ENCODE measurements at regions of chr14 and their contacts with region 1.

Region 1: DNA sequence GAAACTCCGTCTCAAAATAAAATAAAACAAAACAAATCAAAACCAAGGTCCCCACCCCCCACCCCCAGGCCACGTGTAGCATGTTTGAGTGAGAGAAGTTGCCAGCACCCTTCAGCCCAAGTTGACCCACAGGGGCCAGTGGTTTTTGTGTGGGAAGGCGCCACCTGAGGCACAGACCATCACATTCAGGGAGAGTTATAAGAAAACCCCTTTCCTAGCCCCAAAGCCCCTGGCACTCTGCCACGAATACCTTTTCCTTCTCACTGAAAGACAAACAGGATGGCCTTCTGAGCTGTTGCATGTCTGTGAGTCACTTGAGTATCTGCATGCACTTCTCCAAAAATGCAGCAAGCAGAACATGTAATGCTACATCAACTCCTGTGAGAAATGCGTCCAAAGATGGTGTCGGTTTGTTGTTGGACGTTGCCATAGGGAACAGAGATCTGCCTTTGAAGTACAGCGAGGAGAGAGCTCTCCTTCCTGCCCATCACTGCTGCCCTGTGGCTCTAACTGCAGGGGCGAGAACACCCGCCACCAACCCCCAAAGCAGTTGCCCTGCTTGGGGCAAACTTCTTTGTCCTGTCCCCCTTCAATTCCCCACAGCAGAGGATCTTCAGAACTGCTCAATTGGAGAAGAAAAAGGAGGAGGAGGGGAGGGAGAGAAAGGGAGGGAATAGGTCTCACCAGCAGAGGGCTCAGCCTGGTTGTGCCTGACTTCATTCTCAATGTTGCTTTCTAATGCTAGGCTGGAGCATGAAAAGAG is 2.7 kb upstream of the TRAF3 start:
- DNase-seq: peak; percentile 32 to 87 (median 67)
- ATAC-seq: peak; percentile 32
- H3K4me3 ChIP-seq: no peak overlapping the region
- H3K4me3 Mint-ChIP-seq: peak overlapping the region; percentile 57
- H3K27ac ChIP-seq: peak overlapping the region; percentile 46 to 66
- H3K27ac Mint-ChIP-seq: peak overlapping the region; percentile 93
- H3K4me1 ChIP-seq: peaks cover 24% of the 10 kb centered on the region
- H3K4me1 Mint-ChIP-seq: peaks cover 28% of the 10 kb centered on the region
- H3K27me3 ChIP-seq: no peaks in the 10 kb centered on the region
- H3K27me3 Mint-ChIP-seq: no peaks in the 10 kb centered on the region
- CTCF ChIP-seq: peak; percentile 67

Region 2: DNA sequence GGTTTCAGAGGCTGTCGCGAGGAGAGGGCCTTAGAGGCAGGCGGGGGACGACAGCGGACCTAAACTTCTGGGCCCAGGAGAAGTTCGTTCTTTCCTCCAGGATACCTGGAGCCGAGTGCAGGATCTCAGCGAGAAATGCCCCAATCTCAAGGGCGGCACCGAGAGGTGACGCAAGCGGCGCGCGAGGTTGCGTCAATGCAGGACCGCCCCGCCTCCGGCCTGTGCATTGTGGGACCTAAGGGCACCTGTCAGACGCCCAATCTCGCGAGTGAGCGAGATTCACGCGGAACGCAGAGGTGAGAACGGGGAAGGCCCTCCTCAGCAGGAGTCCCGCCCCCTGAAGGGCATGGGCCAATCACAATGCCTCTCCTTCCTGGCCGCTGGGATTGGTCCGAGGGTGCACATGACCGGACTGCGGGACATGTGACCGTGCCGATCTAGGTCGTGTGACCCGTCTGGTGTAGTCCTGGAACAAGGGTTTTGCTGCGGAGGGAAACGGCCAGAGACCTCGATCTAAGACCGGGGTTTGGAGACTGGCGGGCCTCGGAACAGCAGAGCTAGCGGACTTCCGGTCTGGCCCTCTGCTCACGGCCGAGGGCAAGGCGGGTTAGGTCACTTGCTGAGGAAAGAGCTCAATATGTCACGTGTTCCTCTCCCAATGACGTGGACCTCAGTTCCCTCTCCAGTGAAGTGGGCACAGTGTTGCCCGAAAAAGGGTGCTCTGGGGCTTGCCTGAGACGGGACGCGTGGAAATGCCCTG is 826.5 kb before region 1 on chr14:
- CTCF ChIA-PET with region 1: no interaction called
- POLR2A ChIA-PET with region 1: no interaction called
- intact Hi-C with region 1: loop called in 1 of 2 experiments (anchors 5 kb)
- DNase-seq: peak; percentile 98 to 100 (median 99)
- ATAC-seq: peak; percentile 95
- H3K4me3 ChIP-seq: peak overlapping the region; percentile 81 to 82
- H3K4me3 Mint-ChIP-seq: peak overlapping the region; percentile 93
- H3K27ac ChIP-seq: peak overlapping the region; percentile 95 to 100
- H3K27ac Mint-ChIP-seq: peak overlapping the region; percentile 99
- H3K4me1 ChIP-seq: peaks cover 14% of the 10 kb centered on the region
- H3K4me1 Mint-ChIP-seq: peaks cover 20% of the 10 kb centered on the region
- H3K27me3 ChIP-seq: peaks cover 0 to 6% of the 10 kb centered on the region in 2 experiments
- H3K27me3 Mint-ChIP-seq: peaks cover 23% of the 10 kb centered on the region
- CTCF ChIP-seq: no peak

Region 3: GRCh38 chr14:102304611-102305509 is 469.7 kb before region 1 on chr14 and contains the start of gene MOK:
- CTCF ChIA-PET with region 1: no interaction called
- POLR2A ChIA-PET with region 1: no interaction called
- intact Hi-C with region 1: loop called in 1 of 2 experiments (anchors 10 kb)
- DNase-seq: peak; percentile 94 to 99 (median 98)
- ATAC-seq: peak; percentile 92
- H3K4me3 ChIP-seq: peak within 1 kb of the TSS; percentile 83 to 97
- H3K4me3 Mint-ChIP-seq: peak within 1 kb of the TSS; percentile 91
- H3K27ac ChIP-seq: peak within 1 kb of the TSS; percentile 84 to 88
- H3K27ac Mint-ChIP-seq: peak within 1 kb of the TSS; percentile 94
- H3K4me1 ChIP-seq: peaks cover 5% of the 10 kb centered on the region
- H3K4me1 Mint-ChIP-seq: peaks cover 10% of the 10 kb centered on the region
- H3K27me3 ChIP-seq: no peaks in the 10 kb centered on the region
- H3K27me3 Mint-ChIP-seq: peaks cover 2% of the 10 kb centered on the region
- CTCF ChIP-seq: no peak
- total RNA-seq, gene MOK: 2.7 to 3.6 TPM

Region 4: GRCh38 chr14:102908806-102909455 is 134.4 kb after region 1 on chr14:
- CTCF ChIA-PET with region 1: no interaction called
- POLR2A ChIA-PET with region 1: no interaction called
- intact Hi-C with region 1: no loop called
- DNase-seq: no peak
- ATAC-seq: no peak
- H3K4me3 ChIP-seq: no peak overlapping the region
- H3K4me3 Mint-ChIP-seq: no peak overlapping the region
- H3K27ac ChIP-seq: no peak overlapping the region
- H3K27ac Mint-ChIP-seq: no peak overlapping the region
- H3K4me1 ChIP-seq: no peaks in the 10 kb centered on the region
- H3K4me1 Mint-ChIP-seq: no peaks in the 10 kb centered on the region
- H3K27me3 ChIP-seq: no peaks in the 10 kb centered on the region
- H3K27me3 Mint-ChIP-seq: no peaks in the 10 kb centered on the region
- CTCF ChIP-seq: no peak

Region 5: DNA sequence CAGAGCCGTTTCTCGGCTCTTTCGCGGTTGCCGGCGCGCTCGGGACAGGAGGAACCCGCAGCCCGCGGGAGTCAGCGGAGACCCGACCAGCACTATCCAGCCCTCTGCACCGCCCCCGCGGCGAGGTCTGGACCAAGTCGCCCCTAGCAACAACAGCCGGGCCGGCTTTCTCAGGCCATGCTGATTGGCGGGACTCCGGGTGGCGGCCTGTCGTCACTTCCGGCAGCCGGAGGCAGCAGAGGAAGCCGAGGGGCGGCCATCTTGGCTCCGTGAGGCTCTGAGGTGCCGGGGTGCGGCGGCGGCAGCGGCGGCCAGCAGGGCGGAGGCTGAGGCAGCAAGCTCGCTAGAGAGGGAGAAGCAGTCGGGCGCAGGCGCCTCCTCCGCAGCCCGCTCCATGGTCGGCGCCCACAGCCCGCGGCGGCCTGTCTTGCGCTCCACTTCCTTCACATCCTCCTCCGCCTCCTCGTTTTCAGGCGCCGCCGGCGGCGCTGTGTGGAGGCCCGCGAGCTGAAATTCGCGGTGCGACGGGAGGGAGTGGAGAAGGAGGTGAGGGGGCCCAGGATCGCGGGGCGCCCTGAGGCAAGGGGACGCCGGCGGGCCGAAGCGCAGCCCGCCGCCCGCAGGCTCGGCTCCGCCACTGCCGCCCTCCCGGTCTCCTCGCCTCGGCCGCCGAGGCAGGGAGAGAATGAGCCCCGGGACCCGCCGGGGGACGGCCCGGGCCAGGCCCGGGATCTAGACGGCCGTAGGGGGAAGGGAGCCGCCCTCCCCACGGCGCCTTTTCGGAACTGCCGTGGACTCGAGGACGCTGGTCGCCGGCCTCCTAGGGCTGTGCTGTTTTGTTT is 610.8 kb after region 1 on chr14 and contains the start of gene MARK3:
- CTCF ChIA-PET with region 1: no interaction called
- POLR2A ChIA-PET with region 1: no interaction called
- intact Hi-C with region 1: loop called in 1 of 2 experiments (anchors 5 kb)
- DNase-seq: peak; percentile 91 to 98 (median 96)
- ATAC-seq: peak; percentile 88
- H3K4me3 ChIP-seq: peak within 1 kb of the TSS; percentile 72 to 73
- H3K4me3 Mint-ChIP-seq: peak within 1 kb of the TSS; percentile 97
- H3K27ac ChIP-seq: peak within 1 kb of the TSS; percentile 76 to 92
- H3K27ac Mint-ChIP-seq: peak within 1 kb of the TSS; percentile 96
- H3K4me1 ChIP-seq: peaks cover 26% of the 10 kb centered on the region
- H3K4me1 Mint-ChIP-seq: peaks cover 33% of the 10 kb centered on the region
- H3K27me3 ChIP-seq: no peaks in the 10 kb centered on the region
- H3K27me3 Mint-ChIP-seq: no peaks in the 10 kb centered on the region
- CTCF ChIP-seq: peak; percentile 16
- total RNA-seq, gene MARK3: 123 to 124 TPM

Region 6: DNA sequence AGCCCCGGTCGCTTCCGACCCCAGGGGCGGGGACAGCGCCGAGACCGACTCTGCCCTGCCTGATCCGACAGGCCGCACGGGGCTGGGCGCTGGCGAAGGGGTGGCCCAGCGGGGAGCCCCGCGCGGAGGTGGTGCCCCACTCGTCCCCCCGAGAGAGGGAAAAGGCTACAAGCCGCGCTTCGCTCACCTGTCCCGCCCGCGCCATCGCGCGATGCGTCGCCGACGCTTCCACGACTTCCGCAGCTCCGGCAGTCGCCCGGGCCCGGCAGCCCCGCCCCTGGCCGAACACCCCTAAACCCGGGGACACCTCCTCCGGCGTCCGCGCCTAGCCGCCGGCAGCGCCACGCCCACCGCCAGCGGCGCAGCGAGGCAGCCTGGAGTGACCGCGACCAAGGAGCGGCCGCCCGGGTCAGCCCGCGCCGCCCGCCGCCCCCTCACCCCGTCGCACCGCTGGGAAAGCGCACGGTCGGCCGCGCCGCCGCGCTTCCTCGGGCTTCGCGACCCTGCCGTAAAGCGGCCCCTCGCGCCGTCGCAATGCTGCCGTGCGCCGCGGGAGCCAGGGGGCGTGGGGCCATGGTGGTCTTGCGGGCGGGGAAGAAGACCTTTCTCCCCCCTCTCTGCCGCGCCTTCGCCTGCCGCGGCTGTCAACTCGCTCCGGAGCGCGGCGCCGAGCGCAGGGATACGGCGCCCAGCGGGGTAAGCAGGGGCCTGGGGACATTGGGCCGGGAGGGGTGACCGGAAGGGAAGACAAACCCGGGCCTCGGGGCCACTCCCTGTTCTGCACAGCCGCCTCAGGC is 788.1 kb after region 1 on chr14 and contains the starts of genes BAG5 and COA8:
- CTCF ChIA-PET with region 1: no interaction called
- POLR2A ChIA-PET with region 1: no interaction called
- intact Hi-C with region 1: loop called in 1 of 2 experiments (anchors 10 kb)
- DNase-seq: peak; percentile 68 to 92 (median 86)
- ATAC-seq: peak; percentile 81
- H3K4me3 ChIP-seq: peak within 1 kb of the TSS; percentile 96 to 97
- H3K4me3 Mint-ChIP-seq: peak within 1 kb of the TSS; percentile 83
- H3K27ac ChIP-seq: peak within 1 kb of the TSS; percentile 81 to 86
- H3K27ac Mint-ChIP-seq: peak within 1 kb of the TSS; percentile 87
- H3K4me1 ChIP-seq: peaks cover 46% of the 10 kb centered on the region
- H3K4me1 Mint-ChIP-seq: peaks cover 62% of the 10 kb centered on the region
- H3K27me3 ChIP-seq: no peaks in the 10 kb centered on the region
- H3K27me3 Mint-ChIP-seq: no peaks in the 10 kb centered on the region
- CTCF ChIP-seq: no peak
- total RNA-seq, gene BAG5: 46.2 to 46.3 TPM
- total RNA-seq, gene COA8: 11.6 to 13.4 TPM

Measured in CD8-positive, alpha-beta T cell (primary cell).